Transverse colon (tissue), 4 donors: ENCODE measurements at regions of chr2 and their contacts with region 1.

Region 1: DNA sequence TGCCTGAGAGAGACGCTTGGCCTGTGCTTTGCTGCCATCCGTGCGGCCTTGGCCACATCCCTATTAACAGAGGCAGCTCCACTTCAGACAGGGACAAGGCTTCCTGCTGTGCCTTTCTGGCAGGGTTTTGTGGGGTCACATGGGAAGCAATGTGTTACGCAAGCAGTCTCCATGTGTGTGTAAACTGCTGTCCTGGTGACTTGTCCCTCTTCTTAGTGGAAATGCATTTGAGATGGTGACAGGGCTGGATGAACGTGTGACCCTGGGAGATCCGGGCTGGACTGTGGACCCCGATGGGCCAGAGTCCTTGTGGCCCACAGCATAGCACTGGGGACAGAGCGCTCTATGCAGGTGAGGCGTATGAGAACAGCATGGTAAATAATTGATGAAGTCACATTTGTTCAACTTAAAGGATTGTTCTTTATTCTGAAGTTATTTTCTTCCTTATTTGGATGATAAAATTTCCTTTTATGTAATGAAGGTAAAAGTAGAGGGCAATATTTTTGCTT is 23.2 kb downstream of the ASB1 start:
- DNase-seq: peak; percentile 54
- H3K4me3 ChIP-seq: no peak overlapping the region
- H3K27ac ChIP-seq: peak overlapping the region in 3 of 4 donors; percentile 5 to 51 (median 43)
- H3K4me1 ChIP-seq: no peaks in the 10 kb centered on the region
- H3K27me3 ChIP-seq: no peaks in the 10 kb centered on the region
- CTCF ChIP-seq: no peak
- EP300 ChIP-seq: no peak
- POLR2A ChIP-seq: no peak

Region 2: DNA sequence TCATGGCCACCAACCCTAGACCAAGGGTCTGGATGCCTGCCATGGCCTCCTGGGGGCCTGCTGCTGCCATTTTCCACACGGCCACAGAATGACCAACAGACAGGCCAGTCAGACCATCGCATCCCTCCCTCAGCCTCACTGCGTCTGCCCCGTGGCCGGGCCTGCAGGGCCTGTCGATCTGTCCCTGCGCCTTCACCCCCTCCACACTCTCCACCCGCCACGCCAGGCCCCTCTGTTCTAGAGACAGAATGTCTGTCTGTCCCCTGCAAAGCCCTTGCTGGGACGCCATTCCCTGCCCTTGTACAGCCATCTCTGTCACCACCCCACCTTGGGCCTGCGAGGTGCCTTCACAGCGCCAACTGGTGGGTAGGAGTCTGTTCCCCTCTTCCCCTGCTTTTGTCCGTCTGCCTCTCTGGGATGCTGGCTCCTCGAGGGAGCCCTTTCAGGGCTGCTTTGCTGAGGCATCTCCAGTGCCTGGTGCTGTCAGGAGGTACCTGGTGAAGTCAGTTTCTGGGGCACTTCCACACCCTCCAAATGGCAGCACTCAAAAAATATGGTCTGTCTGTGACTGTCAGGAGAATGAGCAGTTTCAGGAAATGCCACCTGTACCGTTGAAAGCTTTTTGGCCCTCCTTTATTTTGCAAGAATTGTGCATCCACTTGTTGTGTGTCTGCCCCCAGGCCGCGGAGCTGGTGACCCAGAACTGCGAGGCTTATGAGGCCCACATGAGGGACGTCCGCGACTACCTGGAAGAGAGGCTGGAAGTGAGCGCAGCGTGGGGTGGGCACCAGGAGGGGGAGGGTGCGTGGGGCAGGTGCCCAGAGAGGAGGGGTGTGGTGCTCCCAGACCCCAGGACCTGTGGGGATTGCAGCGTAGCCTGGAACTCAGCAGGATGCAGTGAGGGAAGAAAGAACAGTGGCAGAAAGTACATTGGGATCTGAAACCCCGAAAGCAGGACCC is 356.5 kb before region 1 on chr2:
- in situ Hi-C with region 1: no loop called
- intact Hi-C with region 1: no loop called
- DNase-seq: no peak
- H3K4me3 ChIP-seq: no peak overlapping the region
- H3K27ac ChIP-seq: no peak overlapping the region
- H3K4me1 ChIP-seq: no peaks in the 10 kb centered on the region
- H3K27me3 ChIP-seq: no peaks in the 10 kb centered on the region
- CTCF ChIP-seq: no peak
- EP300 ChIP-seq: no peak
- POLR2A ChIP-seq: no peak

Region 3: GRCh38 chr2:238380391-238381184 is 69.4 kb before region 1 on chr2:
- in situ Hi-C with region 1: loop called in 1 of 4 experiments (anchors 10 kb)
- intact Hi-C with region 1: no loop called
- DNase-seq: no peak
- H3K4me3 ChIP-seq: no peak overlapping the region
- H3K27ac ChIP-seq: no peak overlapping the region
- H3K4me1 ChIP-seq: peaks cover 0 to 17% (median 3%) of the 10 kb centered on the region in 4 donors
- H3K27me3 ChIP-seq: no peaks in the 10 kb centered on the region
- CTCF ChIP-seq: no peak
- EP300 ChIP-seq: no peak
- POLR2A ChIP-seq: no peak

Region 4: GRCh38 chr2:238560234-238560633 is 110.3 kb after region 1 on chr2:
- in situ Hi-C with region 1: no loop called
- intact Hi-C with region 1: no loop called
- DNase-seq: no peak
- H3K4me3 ChIP-seq: no peak overlapping the region
- H3K27ac ChIP-seq: no peak overlapping the region
- H3K4me1 ChIP-seq: no peaks in the 10 kb centered on the region
- H3K27me3 ChIP-seq: no peaks in the 10 kb centered on the region
- CTCF ChIP-seq: no peak
- EP300 ChIP-seq: no peak
- POLR2A ChIP-seq: no peak

Region 5: DNA sequence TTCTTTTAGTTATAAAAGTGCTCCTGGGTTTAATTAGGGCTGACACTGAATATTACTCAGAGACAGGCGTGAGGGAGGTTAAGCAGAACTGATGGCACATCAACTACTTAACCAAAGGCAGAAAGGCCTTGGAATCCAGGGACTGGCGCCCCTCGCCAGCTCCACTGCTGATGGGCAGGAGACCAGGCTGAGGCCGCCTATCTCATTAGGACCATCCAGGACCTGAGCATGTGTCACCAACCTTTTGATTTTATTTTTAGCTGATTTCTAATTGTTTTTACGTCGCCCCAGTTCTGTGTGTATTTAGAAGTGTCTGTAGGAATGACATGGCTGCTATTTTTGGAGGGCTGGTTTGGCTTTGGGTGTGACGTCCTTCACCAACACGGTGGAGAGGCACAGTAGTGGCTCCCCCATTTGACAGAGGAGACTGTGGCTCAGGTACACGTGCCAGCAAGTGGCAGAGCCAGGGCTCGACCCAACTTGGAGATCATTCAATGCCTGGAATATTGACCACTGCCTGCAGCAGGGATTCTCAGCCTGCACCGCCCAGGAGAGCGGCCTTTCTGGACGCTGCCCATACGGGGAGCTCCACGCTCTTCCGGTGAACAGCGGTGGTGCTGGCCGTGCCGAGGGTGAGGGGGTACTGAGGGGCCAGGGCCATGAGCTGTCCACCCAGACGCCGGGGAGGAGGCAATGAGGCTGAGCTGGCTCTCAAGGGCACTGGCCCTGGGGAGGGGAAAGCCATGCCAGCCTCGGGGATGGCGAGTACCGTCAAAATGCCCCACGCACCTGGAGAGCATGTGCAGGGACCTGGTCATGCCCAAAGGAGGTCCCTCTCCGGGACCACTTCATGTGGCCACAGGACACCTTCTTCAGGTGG is 182.5 kb after region 1 on chr2:
- in situ Hi-C with region 1: no loop called
- intact Hi-C with region 1: no loop called
- DNase-seq: no peak
- H3K4me3 ChIP-seq: no peak overlapping the region
- H3K27ac ChIP-seq: no peak overlapping the region
- H3K4me1 ChIP-seq: no peaks in the 10 kb centered on the region
- H3K27me3 ChIP-seq: no peaks in the 10 kb centered on the region
- CTCF ChIP-seq: no peak
- EP300 ChIP-seq: no peak
- POLR2A ChIP-seq: no peak